Activated CD4-positive, alpha-beta memory T cell treated with anti-CD3 and anti-CD28 coated beads for 36 hours (primary cell): ENCODE measurements at regions of chr12 and their contacts with region 1.

Region 1: DNA sequence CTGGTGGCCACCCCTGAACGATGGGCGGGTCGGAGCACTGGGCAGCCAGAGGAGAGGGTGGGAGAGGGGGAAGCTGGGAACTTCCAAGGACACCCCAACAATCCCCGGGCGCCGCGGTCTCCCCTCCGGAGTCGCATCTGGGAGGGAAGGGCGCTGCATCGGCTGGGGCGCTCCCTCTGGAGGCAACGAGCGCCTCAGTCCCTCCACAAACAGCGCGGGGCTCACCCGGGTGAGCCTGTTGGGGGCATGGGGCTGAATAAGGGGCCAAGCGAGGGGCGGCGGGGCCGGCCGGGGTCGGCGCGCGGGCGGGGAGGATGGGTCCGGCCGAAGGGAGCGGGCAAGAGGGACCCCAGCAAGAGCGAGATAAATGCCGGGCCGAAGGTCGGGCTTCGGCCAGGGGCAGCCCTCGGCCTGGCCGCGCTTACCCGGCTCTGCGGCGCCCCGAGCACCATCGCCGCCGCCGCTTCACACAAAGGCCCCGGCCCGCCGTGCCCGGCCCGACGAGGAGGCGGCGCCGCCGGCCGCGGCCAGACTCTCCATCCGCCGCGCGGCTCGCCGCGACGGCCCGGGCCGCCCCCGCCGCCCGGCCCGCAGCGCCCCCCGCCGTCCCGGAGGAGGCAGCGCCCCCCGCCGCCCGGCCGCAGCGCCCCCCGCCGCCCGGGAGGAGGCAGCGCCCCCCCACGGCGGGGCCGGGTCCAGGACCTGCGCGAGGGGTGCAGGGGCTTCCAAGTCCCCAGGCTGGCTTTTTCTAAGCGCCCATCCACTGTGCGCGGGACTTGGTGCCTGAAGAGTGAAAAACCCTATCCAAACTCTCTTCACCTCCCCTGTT is at the start of gene ZBTB39:
- DNase-seq: peak; percentile 68
- H3K4me3 Mint-ChIP-seq: peak within 1 kb of the TSS; percentile 91
- H3K27ac Mint-ChIP-seq: peak within 1 kb of the TSS; percentile 71
- H3K4me1 Mint-ChIP-seq: peaks cover 63% of the 10 kb centered on the region
- H3K27me3 Mint-ChIP-seq: no peaks in the 10 kb centered on the region
- total RNA-seq, gene ZBTB39: 5.5 to 5.7 TPM

Region 2: GRCh38 chr12:56751712-56752598 is 254.2 kb before region 1 on chr12 and contains the start of gene PRIM1:
- CTCF ChIA-PET with region 1: interaction called, 58 read pairs
- POLR2A ChIA-PET with region 1: interaction called, 3 read pairs
- intact Hi-C with region 1: no loop called
- DNase-seq: peak; percentile 94
- H3K4me3 Mint-ChIP-seq: peak within 1 kb of the TSS; percentile 99
- H3K27ac Mint-ChIP-seq: peak within 1 kb of the TSS; percentile 99
- H3K4me1 Mint-ChIP-seq: peaks cover 32% of the 10 kb centered on the region
- H3K27me3 Mint-ChIP-seq: no peaks in the 10 kb centered on the region
- total RNA-seq, gene PRIM1: 74.5 to 75.3 TPM

Region 3: DNA sequence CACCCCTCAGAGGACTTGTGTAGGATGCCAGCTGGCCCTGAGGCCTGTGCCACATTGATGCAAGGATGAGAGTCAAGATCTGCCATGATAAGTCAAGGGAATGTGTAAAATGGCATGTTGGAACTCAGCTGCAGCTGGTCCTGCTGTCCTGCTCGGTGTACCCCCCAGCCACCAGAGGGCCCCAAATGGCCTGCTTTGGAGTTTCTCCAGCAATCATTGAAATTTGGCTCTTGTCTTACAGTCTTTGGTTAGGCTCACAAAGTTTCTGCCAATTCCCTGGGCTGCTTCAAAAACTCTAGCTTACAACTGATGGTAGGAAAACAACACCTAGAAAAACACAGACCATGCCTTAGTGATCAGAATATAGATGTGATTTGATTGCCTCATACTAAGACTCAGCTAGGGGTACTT is 166.3 kb before region 1 on chr12:
- CTCF ChIA-PET with region 1: interaction called, 8 read pairs
- POLR2A ChIA-PET with region 1: no interaction called
- intact Hi-C with region 1: loop called (anchors 1 kb)
- DNase-seq: peak; percentile 57
- H3K4me3 Mint-ChIP-seq: no peak overlapping the region
- H3K27ac Mint-ChIP-seq: no peak overlapping the region
- H3K4me1 Mint-ChIP-seq: peaks cover 19% of the 10 kb centered on the region
- H3K27me3 Mint-ChIP-seq: no peaks in the 10 kb centered on the region

Region 4: DNA sequence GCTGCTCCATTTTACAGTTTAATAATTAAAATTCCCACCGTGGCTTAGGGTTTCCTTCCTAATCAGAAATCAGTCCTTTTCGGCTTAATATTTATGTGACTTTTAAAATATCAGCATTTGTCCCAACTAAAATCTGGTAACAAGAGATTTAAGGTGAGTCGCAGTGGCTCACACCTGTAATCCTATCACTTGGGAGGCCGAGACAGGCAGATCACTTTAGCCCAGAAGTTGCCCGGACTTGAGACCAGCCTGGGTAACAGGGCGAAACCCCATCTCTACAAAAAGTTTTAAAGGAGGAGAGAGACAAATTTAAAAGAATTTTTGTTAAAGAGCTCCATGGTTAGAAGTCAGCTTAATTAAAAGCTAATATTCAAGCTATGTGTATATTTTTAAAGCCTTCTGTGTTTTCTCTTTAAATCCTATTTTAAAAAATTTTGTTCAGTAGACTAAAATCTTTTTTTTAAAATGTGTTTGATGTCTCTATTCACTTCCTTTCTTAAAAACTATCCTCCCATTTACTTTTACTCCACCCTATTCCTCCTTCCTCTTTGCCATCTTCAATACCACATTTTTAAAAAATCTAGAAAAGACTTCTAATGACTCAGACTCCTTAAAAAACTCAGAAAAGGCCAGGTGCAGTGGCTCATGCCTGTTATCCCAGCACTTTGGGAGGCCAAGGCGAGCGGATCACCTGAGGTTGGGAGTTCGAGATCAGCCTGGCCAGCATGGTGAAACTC is 14.0 kb after region 1 on chr12:
- CTCF ChIA-PET with region 1: interaction called, 19 read pairs
- POLR2A ChIA-PET with region 1: no interaction called
- intact Hi-C with region 1: no loop called
- DNase-seq: no peak
- H3K4me3 Mint-ChIP-seq: no peak overlapping the region
- H3K27ac Mint-ChIP-seq: no peak overlapping the region
- H3K4me1 Mint-ChIP-seq: peaks cover 7% of the 10 kb centered on the region
- H3K27me3 Mint-ChIP-seq: no peaks in the 10 kb centered on the region

Region 5: GRCh38 chr12:57046947-57047890 is 41.0 kb after region 1 on chr12:
- CTCF ChIA-PET with region 1: interaction called, 10 read pairs
- POLR2A ChIA-PET with region 1: no interaction called
- intact Hi-C with region 1: loop called (anchors 1 kb)
- DNase-seq: peak; percentile 83
- H3K4me3 Mint-ChIP-seq: peak overlapping the region; percentile 28
- H3K27ac Mint-ChIP-seq: peak overlapping the region; percentile 65
- H3K4me1 Mint-ChIP-seq: peaks cover 21% of the 10 kb centered on the region
- H3K27me3 Mint-ChIP-seq: no peaks in the 10 kb centered on the region

Region 6: DNA sequence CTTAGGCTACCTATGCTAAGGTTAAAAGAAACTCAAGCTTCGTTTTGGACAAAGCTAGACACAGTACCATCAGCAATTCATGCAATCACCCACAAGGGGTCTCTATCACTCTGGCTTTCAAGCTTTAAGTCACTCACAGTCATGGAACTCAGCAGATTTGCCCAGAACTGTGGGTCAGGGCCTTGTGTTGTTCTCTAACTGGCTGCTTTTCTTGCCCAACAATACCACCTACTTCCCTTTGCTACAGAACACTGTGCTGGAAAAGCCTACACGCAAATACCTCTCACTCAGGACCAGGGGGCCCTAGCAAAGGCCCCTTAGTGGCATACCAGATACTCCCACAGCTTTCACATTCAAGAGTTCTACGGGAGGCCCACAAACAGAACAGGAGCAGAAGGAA is 63.3 kb after region 1 on chr12:
- CTCF ChIA-PET with region 1: interaction called, 206 read pairs
- POLR2A ChIA-PET with region 1: no interaction called
- intact Hi-C with region 1: loop called (anchors 1 kb)
- DNase-seq: peak; percentile 68
- H3K4me3 Mint-ChIP-seq: peak overlapping the region; percentile 17
- H3K27ac Mint-ChIP-seq: peak overlapping the region; percentile 91
- H3K4me1 Mint-ChIP-seq: peaks cover 63% of the 10 kb centered on the region
- H3K27me3 Mint-ChIP-seq: no peaks in the 10 kb centered on the region

Region 7: GRCh38 chr12:57166971-57167371 is 160.8 kb after region 1 on chr12:
- CTCF ChIA-PET with region 1: interaction called, 5 read pairs
- POLR2A ChIA-PET with region 1: no interaction called
- intact Hi-C with region 1: loop called (anchors 2 kb)
- DNase-seq: peak; percentile 78
- H3K4me3 Mint-ChIP-seq: no peak overlapping the region
- H3K27ac Mint-ChIP-seq: no peak overlapping the region
- H3K4me1 Mint-ChIP-seq: peaks cover 12% of the 10 kb centered on the region
- H3K27me3 Mint-ChIP-seq: no peaks in the 10 kb centered on the region